ENCODE measurements at regions of chr2 and their contacts with region 1.

Region 1: DNA sequence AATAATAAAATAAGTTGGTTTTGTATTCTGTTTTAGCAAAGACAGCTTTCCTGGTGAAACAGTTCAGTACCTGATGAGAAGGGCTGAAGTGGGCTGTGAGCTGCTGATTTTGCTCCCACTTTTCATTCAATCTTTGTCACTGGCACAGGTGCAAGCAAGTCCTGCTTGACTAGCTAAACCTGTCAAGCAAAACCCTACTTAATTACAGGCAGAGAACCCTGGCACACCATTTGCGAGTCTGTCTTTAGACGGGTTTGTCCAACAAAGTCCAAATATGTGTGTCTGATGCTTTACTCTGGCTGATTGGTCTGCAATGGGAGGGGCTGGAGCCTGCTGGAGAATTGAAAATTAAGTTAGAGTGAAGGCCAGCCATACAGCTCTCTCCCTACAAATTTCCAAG is 267.2 kb downstream of the EPHA4 start:
- DNase-seq: no peak
- H3K4me3 ChIP-seq: no peak overlapping the region
- H3K27ac ChIP-seq: no peak overlapping the region
- H3K4me1 ChIP-seq: no peaks in the 10 kb centered on the region
- H3K27me3 ChIP-seq: no peaks in the 10 kb centered on the region
- CTCF ChIP-seq: no peak

Region 2: DNA sequence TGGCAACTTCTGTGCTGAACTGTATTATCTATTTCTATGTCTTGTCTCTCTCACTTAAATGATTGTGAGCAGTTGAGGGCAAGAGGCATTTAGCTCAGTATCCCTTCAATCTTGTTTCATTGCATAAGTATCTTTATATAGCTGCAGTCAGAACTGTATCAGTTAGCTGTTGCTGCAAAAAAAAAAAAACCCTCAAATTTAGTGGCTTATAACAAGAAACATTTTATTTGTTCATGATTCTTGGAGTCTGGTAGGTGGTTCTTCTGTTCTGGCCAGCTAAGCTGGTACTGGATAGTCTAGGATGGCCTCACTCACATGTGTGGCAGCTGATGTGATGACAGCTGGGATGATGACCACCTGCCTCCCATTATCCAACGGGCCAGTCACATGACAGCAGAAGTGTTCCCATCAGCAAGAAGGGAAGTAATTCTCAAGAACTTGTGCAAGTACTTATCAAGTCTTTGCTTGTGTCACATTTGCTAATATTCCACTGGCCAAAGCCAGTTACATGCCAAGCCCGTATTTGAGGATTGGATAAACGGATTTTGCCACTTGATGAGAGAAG is 1609.7 kb before region 1 on chr2:
- CTCF ChIA-PET with region 1: interaction called, 13 read pairs
- POLR2A ChIA-PET with region 1: no interaction called
- intact Hi-C with region 1: no loop called
- DNase-seq: no peak
- H3K4me3 ChIP-seq: no peak overlapping the region
- H3K27ac ChIP-seq: no peak overlapping the region
- H3K4me1 ChIP-seq: peaks cover 11% of the 10 kb centered on the region
- H3K27me3 ChIP-seq: no peaks in the 10 kb centered on the region
- CTCF ChIP-seq: no peak

Region 3: DNA sequence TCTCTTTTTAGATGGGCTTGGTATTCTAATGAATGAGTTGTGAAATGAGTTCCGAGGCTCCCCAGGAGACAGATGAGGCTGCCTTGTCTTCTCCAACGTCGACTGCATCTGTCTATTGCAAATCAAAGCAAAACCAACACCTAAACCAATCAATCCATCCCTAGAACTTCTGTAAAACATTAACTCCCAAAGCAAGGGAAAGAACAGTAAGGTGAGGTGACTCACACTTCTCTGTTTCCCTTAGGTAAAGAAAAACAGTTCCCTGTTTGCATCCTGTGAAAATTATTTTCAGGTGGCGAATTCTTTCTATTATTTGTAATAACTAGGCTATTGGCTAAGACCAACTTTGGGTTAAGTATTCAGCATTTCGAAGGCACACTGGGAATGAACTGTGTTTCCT is 17.8 kb after region 1 on chr2:
- CTCF ChIA-PET with region 1: no interaction called
- POLR2A ChIA-PET with region 1: no interaction called
- intact Hi-C with region 1: no loop called
- DNase-seq: no peak
- H3K4me3 ChIP-seq: no peak overlapping the region
- H3K27ac ChIP-seq: no peak overlapping the region
- H3K4me1 ChIP-seq: no peaks in the 10 kb centered on the region
- H3K27me3 ChIP-seq: no peaks in the 10 kb centered on the region
- CTCF ChIP-seq: no peak